Left colon (tissue), 2 donors: ENCODE measurements at regions of chr20 and their contacts with region 1.

Region 1: GRCh38 chr20:35994994-35995453 is 26.6 kb downstream of the CNBD2 start:
- DNase-seq: peak; percentile 71 to 92
- ATAC-seq: peak; percentile 95

Region 2: GRCh38 chr20:36132802-36133211 is 137.8 kb after region 1 on chr20:
- intact Hi-C with region 1: loop called (anchors 2 to 10 kb)
- DNase-seq: no peak
- ATAC-seq: no peak

Region 3: DNA sequence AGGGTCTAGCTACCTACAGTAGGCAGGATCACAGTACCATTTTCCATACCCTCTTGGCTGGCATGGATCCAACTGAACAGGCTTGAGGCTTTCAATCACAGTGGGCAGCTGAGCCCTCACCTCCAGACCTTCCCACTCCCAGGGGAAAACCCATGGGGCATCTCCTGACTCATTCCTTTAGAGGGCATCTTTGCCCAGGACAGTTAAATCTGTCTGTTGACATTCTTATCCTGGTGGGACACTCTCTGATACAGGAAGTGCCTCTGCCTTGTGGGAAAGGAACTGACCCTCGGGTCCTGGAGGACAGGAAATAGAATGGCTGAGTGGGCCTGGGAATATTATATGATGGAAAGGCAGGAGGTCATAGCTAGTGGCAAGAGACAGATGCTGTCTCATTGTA is 149.3 kb after region 1 on chr20:
- intact Hi-C with region 1: loop called (anchors 2 to 10 kb)
- DNase-seq: no peak
- ATAC-seq: no peak